ENCODE measurements at regions of chr2 and their contacts with region 1.

Region 1: DNA sequence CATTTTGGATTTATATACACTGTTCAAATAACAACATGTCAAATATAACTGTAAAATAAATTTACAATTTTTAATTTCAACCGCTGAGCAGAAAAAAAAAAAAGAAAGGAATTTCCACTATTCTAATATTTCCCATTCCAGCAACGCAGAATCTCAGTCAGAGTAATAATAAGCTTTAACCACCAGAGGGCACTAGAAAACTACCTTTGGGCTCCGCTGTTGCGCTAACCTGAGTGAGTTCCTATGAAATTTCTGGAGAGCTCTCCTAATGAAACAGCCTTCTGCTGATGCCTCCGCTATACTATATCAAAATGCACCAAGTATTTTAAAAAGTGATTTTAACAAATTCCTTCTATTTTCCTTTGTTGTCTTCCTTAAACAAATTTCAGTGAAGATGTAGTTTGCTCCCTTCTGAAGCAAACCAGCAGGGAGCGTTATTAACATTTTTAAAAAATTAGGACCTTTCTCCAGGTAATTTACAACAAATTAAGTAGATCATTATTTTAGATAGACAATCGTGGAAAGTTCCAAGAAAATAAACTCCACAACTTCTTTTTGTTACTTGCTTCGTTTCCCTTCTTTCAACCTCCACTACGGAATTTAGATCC is 23.0 kb downstream of the ERMN start:
- DNase-seq: peak; percentile 16
- H3K4me3 ChIP-seq: no peak overlapping the region
- H3K27ac ChIP-seq: no peak overlapping the region
- H3K27me3 ChIP-seq: no peaks in the 10 kb centered on the region
- CTCF ChIP-seq: peak; percentile 73

Region 2: GRCh38 chr2:157229572-157229971 is 73.0 kb before region 1 on chr2:
- CTCF ChIA-PET with region 1: interaction called, 15 read pairs
- POLR2A ChIA-PET with region 1: no interaction called
- DNase-seq: peak; percentile 58
- H3K4me3 ChIP-seq: no peak overlapping the region
- H3K27ac ChIP-seq: no peak overlapping the region
- H3K27me3 ChIP-seq: no peaks in the 10 kb centered on the region
- CTCF ChIP-seq: no peak

Region 3: DNA sequence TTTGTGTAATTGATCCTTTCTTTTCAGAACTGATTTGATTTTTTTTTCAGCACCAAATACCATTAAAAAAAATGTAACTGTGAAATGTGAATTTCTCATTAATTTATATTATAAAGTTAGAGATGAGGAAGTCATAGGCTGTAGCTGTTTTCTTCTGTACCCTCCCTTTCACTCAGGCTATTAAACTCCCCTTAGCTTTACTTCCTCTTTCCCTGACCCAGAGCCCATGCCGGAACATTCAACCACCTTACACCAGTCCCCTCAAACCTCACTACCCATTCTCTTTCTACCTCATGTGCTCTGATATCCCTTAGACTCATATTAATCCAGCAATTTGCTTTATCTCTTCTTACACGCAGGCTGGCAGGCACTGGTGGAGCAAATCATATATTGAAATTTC is 32.7 kb before region 1 on chr2:
- CTCF ChIA-PET with region 1: interaction called, 22 read pairs
- POLR2A ChIA-PET with region 1: no interaction called
- DNase-seq: no peak
- H3K4me3 ChIP-seq: no peak overlapping the region
- H3K27ac ChIP-seq: no peak overlapping the region
- H3K27me3 ChIP-seq: no peaks in the 10 kb centered on the region
- CTCF ChIP-seq: no peak

Region 4: GRCh38 chr2:157291009-157291408 is 11.6 kb before region 1 on chr2:
- CTCF ChIA-PET with region 1: interaction called, 66 read pairs
- POLR2A ChIA-PET with region 1: interaction called, 4 read pairs
- DNase-seq: no peak
- H3K4me3 ChIP-seq: no peak overlapping the region
- H3K27ac ChIP-seq: no peak overlapping the region
- H3K27me3 ChIP-seq: no peaks in the 10 kb centered on the region
- CTCF ChIP-seq: no peak

Region 5: DNA sequence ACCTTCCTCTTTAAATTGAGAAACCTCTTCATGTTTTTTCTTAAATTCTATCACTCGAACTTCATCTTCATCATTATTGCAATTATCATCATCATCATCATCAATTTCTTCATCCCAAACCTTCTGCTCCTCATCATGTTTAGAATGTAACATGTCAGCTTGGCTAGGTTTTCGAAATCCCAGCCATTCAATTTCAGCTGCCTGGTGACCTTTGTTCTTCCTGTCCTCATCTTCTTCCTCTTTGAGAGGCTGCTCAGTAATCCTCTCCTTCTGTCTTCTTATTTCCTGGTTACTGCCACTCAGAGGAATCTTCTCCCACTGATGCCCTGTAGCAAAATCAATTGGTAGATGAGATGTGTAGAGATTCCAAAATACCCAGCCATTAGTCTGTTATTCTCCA is 18.9 kb after region 1 on chr2:
- CTCF ChIA-PET with region 1: interaction called, 193 read pairs
- POLR2A ChIA-PET with region 1: no interaction called
- DNase-seq: no peak
- H3K4me3 ChIP-seq: no peak overlapping the region
- H3K27ac ChIP-seq: no peak overlapping the region
- H3K27me3 ChIP-seq: no peaks in the 10 kb centered on the region
- CTCF ChIP-seq: no peak

Region 6: DNA sequence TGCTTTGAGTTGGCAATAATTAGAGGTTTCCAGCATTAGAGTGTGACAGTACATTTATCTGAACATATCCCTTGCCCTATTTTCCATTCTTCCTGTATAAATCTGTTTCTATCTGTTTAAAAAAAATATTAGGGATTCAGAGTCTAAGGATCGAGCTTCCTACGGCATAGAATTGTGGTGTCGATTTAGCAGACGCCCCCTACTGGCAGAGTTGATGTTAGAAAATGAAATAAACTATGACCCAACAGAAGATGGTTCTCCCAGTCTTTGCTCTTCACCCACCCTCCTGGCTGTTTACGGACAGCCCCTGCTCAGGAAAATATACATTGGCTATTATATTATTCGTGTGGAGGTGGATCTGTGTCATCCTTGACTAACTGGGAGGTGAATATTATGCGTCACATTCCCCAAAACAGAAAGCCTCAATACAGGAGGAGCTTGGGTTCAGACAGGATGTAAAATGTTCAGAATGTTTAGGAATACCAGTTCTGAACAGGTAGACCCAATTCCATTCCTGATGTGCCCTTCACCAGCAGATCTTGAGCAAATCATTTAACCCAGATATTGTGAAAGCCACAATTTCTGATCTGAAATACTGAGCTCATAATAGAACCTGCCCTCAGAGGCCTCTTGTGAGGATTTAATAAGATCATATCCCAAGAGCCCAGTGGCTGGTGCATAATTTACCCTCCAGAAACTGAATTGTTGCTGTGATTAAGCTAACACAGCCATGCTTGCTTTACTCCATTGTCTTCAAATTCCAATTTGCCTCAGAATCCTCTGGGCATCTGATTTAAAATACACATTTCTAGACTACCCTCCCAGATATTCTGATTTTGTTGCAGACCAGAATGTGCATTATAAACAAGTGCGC is 33.8 kb after region 1 on chr2:
- CTCF ChIA-PET with region 1: interaction called, 299 read pairs
- POLR2A ChIA-PET with region 1: no interaction called
- DNase-seq: no peak
- H3K4me3 ChIP-seq: no peak overlapping the region
- H3K27ac ChIP-seq: no peak overlapping the region
- H3K27me3 ChIP-seq: no peaks in the 10 kb centered on the region
- CTCF ChIP-seq: peak; percentile 76

Measured in AG04450 (cell line).